Right ventricle myocardium superior (tissue), 1 donor: ENCODE measurements at regions of chr1 and their contacts with region 1.

Region 1: GRCh38 chr1:91579658-91580228 is 79.1 kb downstream of the CDC7 start:
- DNase-seq: no peak
- ATAC-seq: no peak

Region 2: GRCh38 chr1:91091812-91092211 is 487.9 kb before region 1 on chr1:
- intact Hi-C with region 1: no loop called
- DNase-seq: no peak
- ATAC-seq: no peak

Region 3: DNA sequence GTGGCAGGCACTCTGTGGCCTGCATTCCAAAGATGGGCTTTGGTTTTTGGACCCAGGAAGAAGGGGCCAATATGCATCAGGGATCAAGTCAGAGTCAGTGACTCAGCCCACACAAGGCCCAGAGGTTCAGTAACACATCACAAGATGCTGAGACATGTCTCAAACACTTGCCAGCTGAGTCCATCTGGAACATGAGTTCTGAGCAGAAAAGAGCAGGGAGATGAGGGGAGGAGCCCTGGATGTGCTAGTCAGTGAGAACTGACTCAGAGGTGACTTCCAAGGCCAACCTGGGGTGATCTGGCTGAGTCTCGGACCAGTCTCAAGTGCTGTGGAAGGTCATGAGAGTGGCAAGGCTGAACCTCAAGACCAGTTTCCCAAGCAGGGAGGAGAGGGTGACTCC is 71.0 kb after region 1 on chr1:
- intact Hi-C with region 1: loop called (anchors 2 kb)
- DNase-seq: peak; percentile 73
- ATAC-seq: peak; percentile 90